ENCODE measurements at regions of chr10 and their contacts with region 1.

Region 1: GRCh38 chr10:80662577-80663261 is 125.0 kb downstream of the SH2D4B start:
- DNase-seq: peak; percentile 83 to 92 (median 88)
- ATAC-seq: peak; percentile 87
- H3K4me3 ChIP-seq: no peak overlapping the region
- H3K27ac ChIP-seq: no peak overlapping the region
- H3K4me1 ChIP-seq: no peaks in the 10 kb centered on the region; a peak in 1 of 5 replicates
- H3K27me3 ChIP-seq: peaks cover 0 to 25% of the 10 kb centered on the region in 2 experiments; a peak in 2 of 5 replicates
- CTCF ChIP-seq: peak; percentile 84 to 91 (median 87)
- EP300 ChIP-seq: no peak
- POLR2A ChIP-seq: no peak
- RAD21 ChIP-seq: peak; percentile 73 to 86

Region 2: DNA sequence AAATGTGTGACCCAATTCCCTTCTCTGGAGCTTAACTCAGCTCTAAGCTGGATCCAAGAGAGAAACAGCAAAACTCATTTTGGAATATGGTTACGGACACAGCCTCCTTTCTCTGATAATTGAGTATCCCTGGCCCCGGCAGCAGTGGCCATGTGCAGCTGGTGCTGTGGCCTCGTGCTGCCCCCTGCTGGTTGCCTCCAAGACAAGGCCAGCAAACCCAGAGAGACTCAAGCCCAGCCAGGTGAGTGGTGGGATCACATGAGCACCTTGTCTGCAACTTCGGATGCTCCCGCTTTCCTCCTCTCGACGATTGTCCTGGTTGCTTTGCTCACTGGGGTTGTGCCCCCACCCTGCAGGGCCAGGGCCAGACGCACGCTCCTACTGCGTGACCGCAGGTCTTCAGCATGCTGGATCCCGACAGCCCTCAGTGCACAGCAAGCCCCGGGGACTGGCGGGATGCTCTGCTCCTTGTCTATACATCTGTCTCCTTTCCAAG is 733.3 kb before region 1 on chr10:
- CTCF ChIA-PET with region 1: no interaction called
- POLR2A ChIA-PET with region 1: no interaction called
- in situ Hi-C with region 1: no loop called
- intact Hi-C with region 1: no loop called
- DNase-seq: peak; percentile 83 to 90 (median 88)
- ATAC-seq: peak; percentile 97
- H3K4me3 ChIP-seq: no peak overlapping the region
- H3K27ac ChIP-seq: no peak overlapping the region
- H3K4me1 ChIP-seq: peaks cover 3 to 4% of the 10 kb centered on the region in 2 experiments; a peak in 3 of 5 replicates
- H3K27me3 ChIP-seq: peaks cover 26 to 37% of the 10 kb centered on the region in 2 experiments
- CTCF ChIP-seq: peak; percentile 93 to 98 (median 97)
- EP300 ChIP-seq: no peak
- POLR2A ChIP-seq: no peak
- RAD21 ChIP-seq: peak; percentile 99

Region 3: GRCh38 chr10:80444646-80445319 is 217.9 kb before region 1 on chr10:
- CTCF ChIA-PET with region 1: no interaction called
- POLR2A ChIA-PET with region 1: no interaction called
- in situ Hi-C with region 1: no loop called
- intact Hi-C with region 1: loop called (anchors 5 kb)
- DNase-seq: peak; percentile 87 to 89 (median 88)
- ATAC-seq: peak; percentile 90
- H3K4me3 ChIP-seq: no peak overlapping the region
- H3K27ac ChIP-seq: no peak overlapping the region
- H3K4me1 ChIP-seq: peaks cover 15 to 22% of the 10 kb centered on the region in 2 experiments
- H3K27me3 ChIP-seq: no peaks in the 10 kb centered on the region; a peak in 1 of 5 replicates
- CTCF ChIP-seq: peak; percentile 96 to 99 (median 98)
- EP300 ChIP-seq: no peak
- POLR2A ChIP-seq: no peak
- RAD21 ChIP-seq: peak; percentile 99 to 100

Region 4: DNA sequence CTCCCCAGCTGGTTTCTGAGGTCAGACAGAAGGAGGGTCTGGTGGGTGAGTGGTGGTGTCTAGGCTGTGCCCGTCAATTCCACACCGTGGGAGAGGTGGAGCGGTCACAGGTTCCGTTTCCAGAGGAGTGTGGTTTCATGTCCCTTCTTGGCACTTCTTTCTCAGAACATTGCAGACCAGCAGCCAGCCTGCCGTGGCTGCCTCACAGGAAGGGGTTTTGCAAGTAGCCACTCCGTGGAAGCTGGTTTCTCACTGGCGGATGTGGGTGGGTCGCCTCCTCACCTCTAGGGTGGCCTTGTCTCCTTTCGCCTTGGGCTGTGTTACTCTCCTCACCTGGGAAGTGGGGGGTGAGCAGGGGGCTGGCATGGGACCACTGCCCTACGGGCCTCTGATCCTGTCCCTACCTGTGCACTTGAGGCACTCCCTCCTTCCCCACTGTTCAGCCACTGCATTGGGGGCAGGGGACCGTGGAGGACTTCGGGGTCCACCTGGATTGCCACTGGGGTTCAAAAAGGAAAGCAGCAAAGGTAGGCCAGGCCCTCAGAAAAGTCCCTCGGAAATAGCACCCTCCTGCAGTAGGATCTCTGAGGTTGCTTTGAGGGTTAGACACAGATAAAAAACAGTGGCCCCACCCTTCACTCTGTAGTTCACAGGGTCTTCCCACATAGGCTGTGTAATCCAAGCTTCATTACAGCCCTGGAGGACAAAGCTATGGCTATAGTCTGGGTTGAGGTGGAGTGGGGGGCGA is 174.8 kb before region 1 on chr10:
- CTCF ChIA-PET with region 1: no interaction called
- POLR2A ChIA-PET with region 1: no interaction called
- in situ Hi-C with region 1: no loop called
- intact Hi-C with region 1: no loop called
- DNase-seq: peak in 2 of 4 experiments; percentile 55 to 63
- ATAC-seq: peak; percentile 69
- H3K4me3 ChIP-seq: no peak overlapping the region
- H3K27ac ChIP-seq: peak overlapping the region; percentile 14; the same call in 1 of the 3 replicates
- H3K4me1 ChIP-seq: peaks cover 44 to 51% of the 10 kb centered on the region in 2 experiments
- H3K27me3 ChIP-seq: no peaks in the 10 kb centered on the region
- CTCF ChIP-seq: no peak
- EP300 ChIP-seq: no peak
- POLR2A ChIP-seq: no peak
- RAD21 ChIP-seq: no peak

Region 5: DNA sequence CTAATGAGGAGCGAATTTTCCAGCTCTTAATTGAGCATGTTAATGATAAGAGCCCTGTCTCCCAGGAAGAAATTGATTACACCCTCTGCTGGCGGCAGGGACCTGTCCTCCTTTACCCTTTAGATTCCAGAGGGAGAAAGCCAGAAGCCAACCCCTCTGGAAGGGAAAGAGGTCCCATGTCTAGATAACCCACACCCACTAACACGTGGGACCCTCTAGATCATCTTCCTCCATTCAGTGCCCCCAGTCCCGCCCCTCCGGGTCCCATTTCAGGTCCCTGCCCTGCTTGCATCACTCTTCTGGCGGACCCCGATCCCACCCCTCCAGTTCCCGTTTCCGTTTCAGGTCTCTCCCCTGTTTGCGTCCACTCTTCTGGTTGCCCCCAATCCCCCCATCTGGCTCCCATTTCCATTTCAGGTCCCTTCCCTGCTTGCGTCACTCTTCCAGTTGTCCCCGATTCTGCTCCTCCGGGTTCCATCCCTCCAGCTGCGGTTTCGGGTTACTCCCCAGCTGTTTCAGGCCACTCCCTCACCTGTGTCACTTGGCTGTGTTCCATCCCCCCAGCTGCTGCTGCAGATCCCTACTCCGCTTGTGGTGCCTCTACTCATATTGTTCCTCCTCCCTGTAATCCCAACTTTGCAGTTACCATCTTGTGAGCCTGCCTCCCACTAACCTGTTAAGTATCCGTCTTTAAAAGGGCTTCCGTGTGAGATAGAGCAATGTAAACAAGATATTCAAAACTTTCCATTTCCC is 77.4 kb after region 1 on chr10:
- CTCF ChIA-PET with region 1: no interaction called
- POLR2A ChIA-PET with region 1: no interaction called
- in situ Hi-C with region 1: no loop called
- intact Hi-C with region 1: loop called (anchors 1 kb)
- DNase-seq: peak; percentile 38 to 85 (median 64)
- ATAC-seq: peak; percentile 85
- H3K4me3 ChIP-seq: peak overlapping the region; percentile 3; the same call in 1 of the 2 replicates
- H3K27ac ChIP-seq: no peak overlapping the region
- H3K4me1 ChIP-seq: peaks cover 11 to 28% of the 10 kb centered on the region in 2 experiments
- H3K27me3 ChIP-seq: no peaks in the 10 kb centered on the region
- CTCF ChIP-seq: no peak
- EP300 ChIP-seq: 0 out of 2 replicates have a peak, but pooled peaks have one; percentile 18
- POLR2A ChIP-seq: no peak
- RAD21 ChIP-seq: no peak

Region 6: DNA sequence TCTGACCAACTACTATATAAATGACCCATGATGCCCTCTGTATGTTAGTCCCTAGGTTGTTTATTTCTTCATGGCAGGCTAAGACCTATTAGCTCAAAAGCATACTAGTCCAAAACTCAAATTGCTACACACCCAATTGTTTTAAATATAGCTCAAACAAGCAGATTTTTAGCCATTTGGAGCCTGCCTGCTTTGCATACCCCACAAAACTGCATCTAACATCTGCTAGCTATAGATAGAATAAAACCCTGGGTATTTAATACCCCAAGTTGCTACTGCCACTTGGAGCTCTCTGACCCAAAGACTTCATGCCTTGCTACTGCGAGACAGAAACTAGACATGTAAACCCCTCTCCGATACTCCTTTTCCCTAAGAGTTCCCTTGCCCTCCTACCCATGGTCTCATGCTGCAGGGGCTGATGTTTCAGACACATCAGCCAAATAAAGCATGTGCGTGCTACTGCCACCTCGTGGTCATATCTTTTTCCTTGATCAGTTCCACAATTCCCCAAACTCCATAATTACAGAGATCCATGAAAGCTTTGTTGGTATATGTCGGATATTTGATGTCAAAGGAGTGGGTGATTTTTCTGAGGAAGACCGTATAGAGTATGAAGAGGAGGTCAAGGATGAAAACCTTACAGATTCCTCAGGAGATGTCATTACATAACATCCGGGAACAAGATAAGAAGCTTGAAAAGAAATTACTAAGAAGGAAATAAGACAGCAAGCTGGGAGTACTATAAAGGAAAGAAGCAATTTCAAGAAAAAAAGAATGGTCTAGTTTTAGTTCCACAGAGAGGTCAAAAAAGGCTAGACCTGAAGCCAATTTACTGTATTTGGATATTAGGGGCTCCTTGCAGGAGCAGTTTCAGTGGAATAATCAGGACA is 261.6 kb after region 1 on chr10:
- CTCF ChIA-PET with region 1: interaction called, 3 read pairs
- POLR2A ChIA-PET with region 1: no interaction called
- in situ Hi-C with region 1: no loop called
- intact Hi-C with region 1: loop called (anchors 2 kb)
- DNase-seq: peak; percentile 34 to 72 (median 49)
- ATAC-seq: peak; percentile 93
- H3K4me3 ChIP-seq: no peak overlapping the region
- H3K27ac ChIP-seq: no peak overlapping the region
- H3K4me1 ChIP-seq: no peaks in the 10 kb centered on the region
- H3K27me3 ChIP-seq: no peaks in the 10 kb centered on the region
- CTCF ChIP-seq: peak; percentile 67 to 74 (median 70)
- EP300 ChIP-seq: no peak
- POLR2A ChIP-seq: no peak
- RAD21 ChIP-seq: peak; percentile 60 to 73